ENCODE measurements at regions of chr18 and their contacts with region 1.

Region 1: GRCh38 chr18:51110073-51110803 is 80.2 kb downstream of the SMAD4 start:
- DNase-seq: peak; percentile 58 to 87 (median 85)
- ATAC-seq: peak; percentile 88 to 95
- H3K4me3 ChIP-seq: no peak overlapping the region
- H3K27ac ChIP-seq: no peak overlapping the region
- H3K4me1 ChIP-seq: no peaks in the 10 kb centered on the region
- H3K27me3 ChIP-seq: no peaks in the 10 kb centered on the region

Region 2: GRCh38 chr18:51383116-51383515 is 272.9 kb after region 1 on chr18:
- intact Hi-C with region 1: loop called in 3 of 4 experiments (anchors 10 kb)
- DNase-seq: no peak
- ATAC-seq: no peak
- H3K4me3 ChIP-seq: no peak overlapping the region
- H3K27ac ChIP-seq: no peak overlapping the region
- H3K4me1 ChIP-seq: no peaks in the 10 kb centered on the region
- H3K27me3 ChIP-seq: no peaks in the 10 kb centered on the region

Region 3: DNA sequence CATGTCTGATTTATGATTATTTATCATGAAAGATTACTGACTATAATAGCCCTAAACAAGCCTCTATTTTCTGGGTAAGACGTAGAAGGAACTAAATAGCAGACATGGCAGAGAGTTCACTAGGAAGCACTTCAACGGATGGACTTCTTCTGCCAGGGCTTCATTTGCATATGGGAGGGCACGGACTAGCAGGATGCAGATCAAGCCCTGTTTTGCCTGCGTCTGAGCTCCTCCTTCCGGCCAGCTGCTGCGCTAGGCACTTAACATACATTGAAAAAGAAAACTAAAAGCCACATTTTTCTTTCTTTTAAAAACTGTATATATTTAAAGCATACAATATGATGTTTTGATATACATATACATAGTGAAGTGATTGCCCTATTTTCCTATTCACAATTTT is 427.2 kb after region 1 on chr18:
- intact Hi-C with region 1: loop called in 2 of 4 experiments (anchors 10 kb)
- DNase-seq: peak in 2 of 3 donors; percentile 11 to 55
- ATAC-seq: peak; percentile 58 to 81
- H3K4me3 ChIP-seq: no peak overlapping the region
- H3K27ac ChIP-seq: no peak overlapping the region
- H3K4me1 ChIP-seq: no peaks in the 10 kb centered on the region
- H3K27me3 ChIP-seq: no peaks in the 10 kb centered on the region

Region 4: DNA sequence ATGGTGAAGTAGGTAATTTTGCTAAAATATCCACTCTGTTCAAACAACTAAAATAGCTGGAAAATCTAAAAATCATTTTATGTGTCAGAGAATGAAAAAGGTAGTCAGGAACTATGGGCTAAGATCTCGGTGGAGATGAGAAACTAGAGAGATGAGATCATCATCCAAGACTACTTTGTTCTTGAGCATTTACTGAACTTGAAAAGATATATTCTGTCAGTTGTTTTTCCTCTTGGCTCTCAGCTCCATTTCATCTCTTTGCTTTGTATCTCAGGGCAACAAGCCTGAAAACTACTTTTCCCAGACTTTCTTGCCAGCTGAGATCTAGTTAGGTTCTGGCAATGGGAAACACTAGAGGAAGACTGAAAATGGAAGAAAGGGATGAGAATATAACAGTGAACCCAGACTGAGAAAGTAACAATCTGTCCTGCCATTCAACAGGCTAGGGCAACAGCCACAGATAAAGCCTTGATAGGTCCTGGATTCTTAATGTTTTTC is 433.5 kb after region 1 on chr18:
- intact Hi-C with region 1: loop called in 2 of 4 experiments (anchors 10 kb)
- DNase-seq: no peak
- ATAC-seq: no peak
- H3K4me3 ChIP-seq: no peak overlapping the region
- H3K27ac ChIP-seq: no peak overlapping the region
- H3K4me1 ChIP-seq: no peaks in the 10 kb centered on the region
- H3K27me3 ChIP-seq: no peaks in the 10 kb centered on the region

Measured in right cardiac atrium (tissue), 5 donors.